ENCODE measurements at regions of chr17 and their contacts with region 1.

Region 1: GRCh38 chr17:43556292-43556691 is 10.2 kb upstream of the ETV4 start:
- DNase-seq: no peak

Region 2: GRCh38 chr17:43673516-43674323 is 117.4 kb after region 1 on chr17:
- in situ Hi-C with region 1: loop called (anchors 25 kb)
- DNase-seq: peak; percentile 69